ENCODE measurements at regions of chr5 and their contacts with region 1.

Region 1: DNA sequence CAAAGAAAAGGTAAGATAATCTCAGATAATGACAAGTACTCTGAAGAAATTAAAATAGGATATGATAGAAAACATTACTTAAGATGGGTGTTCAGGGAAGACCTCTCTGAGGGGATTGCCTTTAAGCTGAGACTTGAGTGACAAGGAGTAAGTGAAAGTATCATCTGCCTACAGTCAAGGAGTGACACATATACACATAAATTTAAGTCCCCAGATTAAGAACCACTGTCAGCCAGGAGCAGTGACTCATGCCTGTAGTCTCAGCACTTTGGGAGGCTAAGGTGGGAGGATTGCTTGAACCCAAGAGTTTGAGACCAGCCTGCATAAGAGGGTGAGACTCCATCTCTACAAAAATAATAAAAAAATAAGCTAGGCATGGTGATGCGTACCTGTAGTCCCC is 19.7 kb upstream of the ANKHD1 start:
- DNase-seq: no peak
- H3K4me3 ChIP-seq: no peak overlapping the region
- CTCF ChIP-seq: no peak
- POLR2A ChIP-seq: no peak

Region 2: DNA sequence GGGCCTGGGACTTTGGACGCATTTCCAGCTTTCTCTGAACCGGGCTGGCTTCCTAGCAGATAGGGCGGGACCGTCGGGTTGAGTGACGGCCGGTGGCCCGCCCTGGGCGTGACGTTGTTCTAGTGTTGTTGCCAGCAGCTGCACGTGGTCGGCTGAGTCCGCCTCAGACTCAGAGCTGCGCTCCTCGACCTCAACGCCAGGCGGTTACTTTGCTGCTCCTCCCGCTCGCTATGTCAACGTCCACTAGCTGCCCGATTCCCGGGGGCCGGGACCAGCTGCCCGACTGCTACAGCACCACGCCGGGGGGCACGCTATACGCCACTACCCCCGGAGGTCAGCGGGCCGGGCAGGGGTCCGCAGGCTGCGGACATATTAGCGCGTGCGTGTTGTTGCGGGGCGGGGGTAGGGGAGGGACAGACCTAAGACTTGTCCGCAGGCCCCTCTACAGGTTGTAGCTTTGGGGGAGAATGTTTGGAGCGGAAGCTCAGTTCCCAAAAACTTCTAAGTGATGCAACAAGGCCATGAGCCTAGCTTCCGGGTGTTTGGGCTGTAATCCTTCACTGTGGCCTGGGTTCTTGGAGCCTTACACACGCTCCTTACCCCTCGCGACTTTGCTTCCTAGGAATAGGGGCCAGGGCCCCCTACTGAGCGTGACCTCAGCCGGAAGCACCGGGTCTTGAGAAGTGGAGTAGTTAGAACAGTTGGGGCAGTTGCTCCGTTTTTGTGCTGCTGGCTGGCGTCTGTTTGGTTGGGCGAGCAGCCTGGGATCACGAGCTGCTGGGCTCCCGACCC is 165.7 kb after region 1 on chr5 and contains the start of gene EIF4EBP3:
- intact Hi-C with region 1: loop called (anchors 10 kb)
- DNase-seq: peak; percentile 97 to 99
- H3K4me3 ChIP-seq: peak within 1 kb of the TSS; percentile 47
- CTCF ChIP-seq: peak in 1 of 3 donors; percentile 94
- POLR2A ChIP-seq: peak in 1 of 2 donors; percentile 47
- total RNA-seq, gene EIF4EBP3: 19.2 to 32.1 (median 27.2) TPM